Transverse colon (tissue), 4 donors: ENCODE measurements at regions of chr4 and their contacts with region 1.

Region 1: DNA sequence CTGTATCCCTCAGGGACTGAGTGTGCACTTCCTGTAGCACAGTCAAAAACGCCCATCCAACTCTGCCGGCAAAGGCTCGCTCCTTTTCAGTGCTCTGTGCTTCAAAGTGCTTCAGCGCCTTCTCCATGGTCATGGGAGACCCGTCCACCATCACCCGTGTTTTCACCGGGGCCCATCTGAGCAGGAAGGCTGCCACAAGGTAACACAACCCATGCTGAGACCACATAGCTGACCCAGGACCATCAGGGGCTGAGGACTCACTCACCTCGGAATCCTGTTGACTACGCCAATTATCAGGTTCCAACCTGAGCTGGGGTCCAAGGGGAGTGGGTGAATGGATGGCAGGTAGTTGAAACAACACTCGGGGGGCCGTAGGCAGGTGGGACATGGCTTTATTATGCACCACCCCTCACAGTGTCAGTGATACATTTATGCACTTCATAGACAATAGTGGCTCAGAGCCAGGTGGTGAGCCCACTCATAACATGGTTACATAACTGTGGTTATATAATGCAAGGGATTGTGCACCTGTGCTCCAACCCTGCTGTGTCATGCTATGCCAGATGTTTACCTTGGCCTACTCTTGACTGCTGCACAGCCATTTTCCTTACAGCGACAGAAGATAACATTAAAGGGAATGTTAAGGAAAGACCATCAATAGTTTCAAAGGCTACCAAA is 227.8 kb downstream of the ADGRL3 start:
- DNase-seq: no peak
- H3K4me3 ChIP-seq: no peak overlapping the region
- H3K27ac ChIP-seq: no peak overlapping the region
- H3K4me1 ChIP-seq: no peaks in the 10 kb centered on the region
- H3K27me3 ChIP-seq: no peaks in the 10 kb centered on the region
- CTCF ChIP-seq: no peak
- EP300 ChIP-seq: no peak
- POLR2A ChIP-seq: no peak

Region 2: DNA sequence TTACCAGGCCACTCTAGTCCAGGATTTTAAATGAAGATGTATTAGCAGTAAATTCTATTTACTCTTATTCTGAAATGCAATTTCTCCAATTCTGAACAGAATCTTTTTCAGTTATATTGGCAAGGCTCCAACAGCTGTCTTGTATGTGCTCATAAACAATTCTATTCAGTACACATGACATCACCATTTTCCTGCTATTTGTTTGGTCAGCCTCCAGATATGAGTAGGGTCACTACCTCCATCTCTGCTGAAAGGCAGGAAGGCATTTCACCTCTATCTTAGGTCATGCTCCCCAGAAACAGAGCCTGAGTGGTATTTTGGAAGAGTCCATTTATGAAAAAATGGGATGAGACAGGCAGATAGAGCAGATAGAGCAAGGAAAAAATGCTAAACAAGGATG is 378.9 kb before region 1 on chr4:
- in situ Hi-C with region 1: no loop called
- intact Hi-C with region 1: no loop called
- DNase-seq: no peak
- H3K4me3 ChIP-seq: no peak overlapping the region
- H3K27ac ChIP-seq: no peak overlapping the region
- H3K4me1 ChIP-seq: no peaks in the 10 kb centered on the region
- H3K27me3 ChIP-seq: no peaks in the 10 kb centered on the region
- CTCF ChIP-seq: no peak
- EP300 ChIP-seq: no peak
- POLR2A ChIP-seq: no peak

Region 3: DNA sequence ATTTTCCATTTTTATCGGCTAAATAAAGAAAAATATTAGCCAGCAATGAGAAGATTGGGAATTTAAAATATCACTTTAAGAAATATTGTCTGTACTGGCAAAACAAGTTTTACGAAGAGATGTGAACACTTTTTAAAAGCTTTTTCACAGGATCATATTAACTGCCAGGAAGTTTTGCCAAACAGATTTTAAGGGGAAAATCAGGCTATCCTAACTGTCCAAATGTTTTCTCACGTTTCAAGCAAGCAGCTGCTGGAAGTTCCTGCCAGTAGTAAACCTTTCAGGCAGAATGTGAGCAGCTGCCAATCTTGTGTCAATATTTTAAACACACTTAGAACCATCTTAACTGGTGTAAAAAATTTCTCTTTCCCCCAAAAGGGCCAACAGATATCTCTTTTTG is 126.7 kb before region 1 on chr4:
- in situ Hi-C with region 1: no loop called
- intact Hi-C with region 1: loop called (anchors 10 kb)
- DNase-seq: no peak
- H3K4me3 ChIP-seq: no peak overlapping the region
- H3K27ac ChIP-seq: no peak overlapping the region
- H3K4me1 ChIP-seq: no peaks in the 10 kb centered on the region
- H3K27me3 ChIP-seq: no peaks in the 10 kb centered on the region
- CTCF ChIP-seq: no peak
- EP300 ChIP-seq: no peak
- POLR2A ChIP-seq: no peak